Endothelial cell of umbilical vein (primary cell): ENCODE measurements at regions of chr1 and their contacts with region 1.

Region 1: DNA sequence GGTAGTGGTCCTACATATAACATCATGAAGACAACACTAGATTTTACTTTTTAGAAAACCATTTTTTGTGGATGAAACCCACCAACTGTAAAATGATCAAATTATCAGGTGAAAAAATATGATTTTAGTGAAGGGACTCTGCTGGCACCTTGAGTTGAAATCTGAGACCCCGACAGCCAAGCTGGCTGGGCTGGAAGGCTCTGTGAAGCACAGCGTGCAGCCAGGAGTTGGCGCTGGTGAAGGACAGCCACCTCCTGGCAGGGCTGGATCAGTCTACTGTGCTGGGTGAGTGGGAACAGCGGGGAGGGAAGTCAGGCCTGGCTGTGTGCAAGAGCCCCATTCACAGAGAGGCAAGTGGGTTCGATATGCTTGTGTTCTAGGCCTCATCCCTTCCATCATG is 47.9 kb downstream of the DDAH1 start:
- DNase-seq: peak; percentile 74
- H3K4me3 ChIP-seq: no peak overlapping the region
- H3K27ac ChIP-seq: peak overlapping the region; percentile 61
- H3K4me1 ChIP-seq: peaks cover 30% of the 10 kb centered on the region
- H3K27me3 ChIP-seq: no peaks in the 10 kb centered on the region
- CTCF ChIP-seq: peak in 1 of 2 donors; percentile 47
- POLR2A ChIP-seq: no peak

Region 2: GRCh38 chr1:84853741-84854721 is 563.0 kb before region 1 on chr1:
- CTCF ChIA-PET with region 1: no interaction called
- POLR2A ChIA-PET with region 1: no interaction called
- dilution Hi-C with region 1: no loop called
- intact Hi-C with region 1: no loop called
- DNase-seq: peak; percentile 87
- H3K4me3 ChIP-seq: no peak overlapping the region
- H3K27ac ChIP-seq: peak overlapping the region; percentile 90
- H3K4me1 ChIP-seq: peaks cover 20% of the 10 kb centered on the region
- H3K27me3 ChIP-seq: no peaks in the 10 kb centered on the region
- CTCF ChIP-seq: no peak
- POLR2A ChIP-seq: no peak

Region 3: DNA sequence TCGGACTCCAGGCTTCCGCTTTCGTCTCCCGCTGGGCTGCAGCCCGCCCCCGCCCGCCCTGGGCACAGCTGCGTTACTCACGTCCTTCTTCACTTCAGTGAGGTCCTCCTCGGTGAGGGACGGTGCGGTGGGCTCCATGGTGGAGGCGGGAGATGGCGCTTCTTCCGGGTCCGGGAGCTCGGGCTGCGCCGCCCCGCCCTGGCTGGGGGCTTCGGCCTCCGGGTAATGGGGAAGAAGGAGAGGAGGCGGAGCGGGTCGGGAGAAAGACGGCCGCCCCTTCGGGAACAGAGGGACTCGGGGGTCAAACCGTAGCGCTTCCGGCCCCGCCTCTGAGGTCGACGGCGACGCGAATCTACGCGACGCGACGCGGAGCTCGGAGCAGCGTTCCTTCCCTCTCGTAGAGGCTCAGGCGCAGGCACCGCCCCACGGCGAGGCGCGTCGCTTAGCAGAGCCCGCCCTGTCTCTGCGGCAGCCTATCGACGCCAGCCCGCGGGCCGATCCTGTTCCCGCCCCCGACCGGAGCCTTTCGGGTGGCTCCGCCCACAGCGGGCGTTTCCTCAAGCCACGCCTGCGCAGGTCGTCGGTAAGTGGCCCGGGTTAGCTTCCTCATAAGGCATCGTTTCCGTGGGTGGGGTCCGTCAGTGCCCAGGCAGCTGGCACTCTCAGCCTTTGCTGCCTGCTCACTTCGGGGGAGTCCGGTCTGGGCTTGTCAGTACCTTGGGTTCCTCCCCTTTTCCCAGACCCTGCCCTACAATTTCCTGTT is 140.6 kb before region 1 on chr1 and contains the start of gene BCL10:
- CTCF ChIA-PET with region 1: no interaction called
- POLR2A ChIA-PET with region 1: no interaction called
- dilution Hi-C with region 1: no loop called
- intact Hi-C with region 1: no loop called
- DNase-seq: peak; percentile 99
- H3K4me3 ChIP-seq: peak within 1 kb of the TSS; percentile 95 to 99 (median 98)
- H3K27ac ChIP-seq: peak within 1 kb of the TSS; percentile 100
- H3K4me1 ChIP-seq: peaks cover 56% of the 10 kb centered on the region
- H3K27me3 ChIP-seq: no peaks in the 10 kb centered on the region
- CTCF ChIP-seq: no peak
- POLR2A ChIP-seq: peak; percentile 64
- total RNA-seq, gene BCL10: 74.5 and 78.6 TPM in 2 replicates

Region 4: GRCh38 chr1:85394130-85394529 is 22.9 kb before region 1 on chr1:
- CTCF ChIA-PET with region 1: no interaction called
- POLR2A ChIA-PET with region 1: no interaction called
- dilution Hi-C with region 1: no loop called
- intact Hi-C with region 1: no loop called
- DNase-seq: no peak
- H3K4me3 ChIP-seq: no peak overlapping the region
- H3K27ac ChIP-seq: no peak overlapping the region
- H3K4me1 ChIP-seq: peaks cover 6% of the 10 kb centered on the region
- H3K27me3 ChIP-seq: no peaks in the 10 kb centered on the region
- CTCF ChIP-seq: no peak
- POLR2A ChIP-seq: no peak

Region 5: GRCh38 chr1:85406887-85407533 is 10.0 kb before region 1 on chr1:
- CTCF ChIA-PET with region 1: interaction called, 7 read pairs
- POLR2A ChIA-PET with region 1: interaction called, 4 read pairs
- dilution Hi-C with region 1: no loop called
- intact Hi-C with region 1: loop called (anchors 1 kb)
- DNase-seq: peak; percentile 96
- H3K4me3 ChIP-seq: peak overlapping the region in 1 of 3 experiments; percentile 46
- H3K27ac ChIP-seq: peak overlapping the region; percentile 91
- H3K4me1 ChIP-seq: peaks cover 32% of the 10 kb centered on the region
- H3K27me3 ChIP-seq: no peaks in the 10 kb centered on the region
- CTCF ChIP-seq: no peak
- POLR2A ChIP-seq: no peak

Region 6: DNA sequence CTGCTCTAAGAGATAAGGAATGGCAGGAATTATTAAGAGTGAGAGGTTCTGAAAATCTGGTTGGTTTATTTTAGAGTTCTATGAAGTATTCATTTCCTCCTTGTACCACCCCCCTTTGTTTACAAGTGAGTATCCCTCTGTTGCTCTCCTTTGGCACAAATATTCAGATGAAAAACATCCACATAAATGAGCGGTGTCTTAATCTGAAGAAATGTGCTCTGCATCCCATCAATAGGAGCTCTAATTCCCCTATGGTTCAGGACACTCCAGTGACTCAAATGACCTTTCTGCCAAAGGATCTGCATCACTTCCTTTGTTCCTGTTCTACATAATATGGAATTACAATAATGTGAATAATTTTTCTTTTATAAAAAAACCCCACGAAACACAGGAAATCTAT is 31.3 kb after region 1 on chr1:
- CTCF ChIA-PET with region 1: no interaction called
- POLR2A ChIA-PET with region 1: no interaction called
- dilution Hi-C with region 1: no loop called
- intact Hi-C with region 1: loop called (anchors 1 kb)
- DNase-seq: peak; percentile 91
- H3K4me3 ChIP-seq: no peak overlapping the region
- H3K27ac ChIP-seq: peak overlapping the region; percentile 98
- H3K4me1 ChIP-seq: peaks cover 34% of the 10 kb centered on the region
- H3K27me3 ChIP-seq: no peaks in the 10 kb centered on the region
- CTCF ChIP-seq: no peak
- POLR2A ChIP-seq: no peak